ENCODE measurements at regions of chr22 and their contacts with region 1.

Region 1: GRCh38 chr22:31399211-31400028 is at the start of gene DRG1:
- DNase-seq: peak; percentile 98
- H3K4me3 ChIP-seq: peak within 1 kb of the TSS; percentile 91
- H3K27ac ChIP-seq: peak within 1 kb of the TSS; percentile 94
- H3K4me1 ChIP-seq: peaks cover 6% of the 10 kb centered on the region
- H3K27me3 ChIP-seq: no peaks in the 10 kb centered on the region
- CTCF ChIP-seq: no peak
- total RNA-seq, gene DRG1: 115 and 116 TPM in 2 replicates

Region 2: GRCh38 chr22:31327883-31328696 is 71.3 kb before region 1 on chr22:
- CTCF ChIA-PET with region 1: no interaction called
- POLR2A ChIA-PET with region 1: interaction called, 17 read pairs
- intact Hi-C with region 1: no loop called
- DNase-seq: no peak
- H3K4me3 ChIP-seq: no peak overlapping the region
- H3K27ac ChIP-seq: no peak overlapping the region
- H3K4me1 ChIP-seq: no peaks in the 10 kb centered on the region
- H3K27me3 ChIP-seq: no peaks in the 10 kb centered on the region
- CTCF ChIP-seq: no peak

Region 3: DNA sequence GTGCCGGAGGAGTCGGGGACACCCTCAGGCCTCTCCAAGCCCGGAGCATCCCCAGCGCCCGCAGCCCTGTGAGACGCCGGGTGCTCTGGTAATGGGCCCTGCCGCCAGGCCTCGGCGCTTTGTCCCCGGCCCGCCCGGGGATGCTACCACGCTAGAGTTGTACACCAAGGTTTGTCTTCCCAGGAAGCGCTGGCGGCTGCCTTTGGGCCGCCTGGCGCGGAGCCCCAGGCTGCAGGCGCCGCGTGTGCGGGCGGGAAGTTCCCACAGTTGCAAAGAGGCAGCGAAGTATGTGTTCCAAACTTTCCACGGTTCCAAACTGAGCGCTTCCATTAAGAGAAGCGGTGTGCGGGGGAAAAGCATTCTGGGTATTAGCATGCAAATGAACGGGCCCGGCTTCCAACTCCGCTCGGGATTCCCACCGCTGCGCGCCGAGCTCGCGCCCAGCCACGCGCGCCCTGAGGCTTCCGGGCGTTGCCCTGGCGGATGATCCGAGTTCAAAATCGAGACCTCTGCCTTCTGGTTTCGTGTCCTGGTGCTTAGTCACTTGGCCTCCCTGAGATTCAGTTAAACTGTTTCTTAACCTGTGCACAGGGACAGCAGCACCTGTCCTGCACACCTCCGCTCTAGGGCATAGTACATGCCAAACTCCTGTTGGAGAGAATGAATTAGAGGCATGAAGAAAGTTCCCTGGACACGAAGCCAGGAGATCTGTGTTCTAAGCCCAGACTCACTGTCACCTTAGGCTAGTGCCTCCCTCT is 52.0 kb before region 1 on chr22:
- CTCF ChIA-PET with region 1: no interaction called
- POLR2A ChIA-PET with region 1: interaction called, 4 read pairs
- intact Hi-C with region 1: loop called (anchors 1 kb)
- DNase-seq: peak; percentile 91
- H3K4me3 ChIP-seq: peak overlapping the region; percentile 64
- H3K27ac ChIP-seq: peak overlapping the region; percentile 90
- H3K4me1 ChIP-seq: peaks cover 26% of the 10 kb centered on the region
- H3K27me3 ChIP-seq: no peaks in the 10 kb centered on the region
- CTCF ChIP-seq: no peak